ENCODE measurements at regions of chr2 and their contacts with region 1.

Region 1: GRCh38 chr2:113282747-113283533 is 4.2 kb upstream of the PAX8 start:
- DNase-seq: peak; percentile 89 to 94
- ATAC-seq: peak; percentile 80 to 85
- H3K4me3 ChIP-seq: no peak overlapping the region; the same call in 2 of the 3 replicates
- H3K27ac ChIP-seq: peak overlapping the region; percentile 98 to 99
- H3K4me1 ChIP-seq: peaks cover 77% of the 10 kb centered on the region
- CTCF ChIP-seq: peak; percentile 35; the same call in 1 of the 3 replicates
- EP300 ChIP-seq: peak in 1 of 2 experiments; percentile 69; a peak in 3 of 5 replicates
- POLR2A ChIP-seq: peak; percentile 26; the same call in 1 of the 2 replicates
- RAD21 ChIP-seq: peak; percentile 43 to 65

Region 2: DNA sequence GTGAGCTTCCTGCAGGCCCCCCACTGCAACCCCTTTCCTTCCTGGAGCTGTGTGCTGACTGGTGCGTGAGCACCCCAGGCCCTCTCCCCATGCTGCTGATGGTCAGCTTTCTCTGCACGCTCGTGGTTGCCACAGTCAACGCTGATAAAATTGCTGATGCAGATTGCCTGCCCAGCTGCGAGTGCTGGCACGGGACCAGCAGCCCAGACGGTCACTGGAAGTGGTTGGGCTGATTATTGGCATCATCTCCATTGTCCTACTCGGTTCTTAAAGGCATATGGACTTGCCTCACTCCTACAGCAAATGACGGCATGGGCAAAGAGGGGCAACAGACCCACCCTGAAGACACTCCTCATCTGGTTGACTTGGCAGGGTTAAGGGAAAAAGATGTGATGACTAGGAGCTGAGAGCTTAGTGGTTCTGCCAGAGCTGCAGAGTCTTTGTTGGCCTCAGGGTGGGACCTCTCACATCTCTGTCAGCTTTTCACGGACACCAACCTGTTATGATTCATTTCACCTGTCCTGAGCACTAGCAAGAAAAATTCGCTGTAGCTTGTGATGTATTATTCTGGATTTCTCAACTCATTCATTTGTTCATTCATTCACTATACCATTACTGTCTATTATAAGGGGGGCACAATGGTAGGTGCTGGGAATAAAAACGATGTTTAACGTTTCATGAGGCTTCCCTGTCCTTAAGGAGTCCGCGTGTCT is 42.6 kb before region 1 on chr2:
- CTCF ChIA-PET with region 1: interaction called, 21 read pairs
- POLR2A ChIA-PET with region 1: interaction called, 12 read pairs
- DNase-seq: peak; percentile 74 to 87
- ATAC-seq: peak; percentile 69
- H3K4me3 ChIP-seq: 0 out of 3 replicates have a peak overlapping the region, but pooled peaks have one; percentile 1
- H3K27ac ChIP-seq: peak overlapping the region; percentile 97 to 98
- H3K4me1 ChIP-seq: peaks cover 50% of the 10 kb centered on the region
- CTCF ChIP-seq: no peak
- EP300 ChIP-seq: peak; percentile 14 to 49; a peak in 3 of 5 replicates
- POLR2A ChIP-seq: no peak; the same call in 1 of the 2 replicates
- RAD21 ChIP-seq: no peak

Region 3: DNA sequence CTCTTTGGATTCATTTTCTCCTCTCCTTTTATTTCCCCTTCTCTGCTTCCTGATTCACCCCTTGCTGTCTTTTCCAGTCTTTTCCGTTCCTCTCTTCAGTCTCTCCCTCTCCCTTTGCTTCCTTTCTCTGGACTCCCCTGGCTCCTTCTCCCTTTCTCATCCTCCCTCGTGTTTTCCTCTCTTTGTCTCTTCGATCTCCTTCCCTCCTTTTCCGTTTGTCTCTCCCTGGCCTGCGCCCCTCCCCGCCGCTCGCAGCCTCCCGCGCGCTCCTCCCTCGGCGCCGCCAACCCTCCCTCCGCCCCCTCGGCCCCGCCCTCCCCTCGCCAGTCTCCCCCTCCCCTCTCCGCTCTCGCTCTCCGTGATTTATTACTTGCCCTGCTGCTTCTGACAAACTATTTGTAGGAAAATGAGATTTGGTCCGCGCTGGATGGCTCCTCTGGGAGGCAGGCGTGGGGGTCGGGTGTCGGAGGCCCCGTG is 41.8 kb after region 1 on chr2:
- CTCF ChIA-PET with region 1: no interaction called
- POLR2A ChIA-PET with region 1: interaction called, 11 read pairs
- DNase-seq: peak; percentile 80 to 85
- ATAC-seq: peak; percentile 67 to 78
- H3K4me3 ChIP-seq: peak overlapping the region; percentile 60
- H3K27ac ChIP-seq: peak overlapping the region; percentile 89 to 92
- H3K4me1 ChIP-seq: peaks cover 51% of the 10 kb centered on the region
- CTCF ChIP-seq: no peak; the same call in 2 of the 3 replicates
- EP300 ChIP-seq: no peak
- POLR2A ChIP-seq: peak; percentile 33
- RAD21 ChIP-seq: no peak

Measured in A549 (cell line).